ENCODE measurements at regions of chr12 and their contacts with region 1.

Region 1: DNA sequence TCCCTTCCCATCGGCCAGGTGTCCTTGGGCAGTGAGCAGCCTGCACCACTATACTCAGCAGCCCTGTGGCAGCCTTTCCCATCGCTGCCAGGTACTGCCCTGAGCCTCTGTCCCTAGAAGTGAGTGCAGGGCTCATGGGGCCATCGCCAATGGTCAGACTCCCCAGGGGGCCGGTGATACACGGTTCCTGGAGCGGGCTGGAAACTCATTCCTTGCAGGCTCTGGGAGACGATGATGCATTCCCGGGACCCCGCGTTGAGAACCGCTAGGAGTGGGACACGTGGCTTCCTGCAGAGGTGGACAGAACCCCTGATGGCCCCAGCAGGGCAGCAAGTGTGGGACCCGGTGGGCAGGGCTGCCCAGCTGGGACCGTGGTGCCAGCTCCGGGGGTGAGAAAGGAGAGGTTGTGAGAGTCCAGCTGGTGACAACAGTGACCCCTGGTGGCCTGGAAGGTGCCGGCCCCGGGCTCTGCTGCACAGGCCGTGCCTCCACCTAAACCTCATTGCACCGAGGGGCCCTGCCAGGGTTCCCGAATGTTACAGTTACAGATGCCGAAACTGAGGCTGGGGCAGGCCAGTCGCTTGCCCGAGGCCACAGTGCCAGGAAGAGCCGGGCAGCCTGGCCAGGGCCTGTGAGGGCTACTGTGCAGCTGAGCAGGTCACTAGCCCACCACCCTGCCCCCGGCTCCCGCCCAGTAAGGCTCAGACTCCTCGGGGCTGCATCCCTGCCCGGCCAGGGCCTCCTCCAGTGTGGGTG is 33.8 kb downstream of the FBRSL1 start:
- DNase-seq: peak; percentile 93
- H3K4me3 ChIP-seq: no peak overlapping the region; a peak in 1 of 4 replicates
- H3K27ac ChIP-seq: no peak overlapping the region
- H3K4me1 ChIP-seq: no peaks in the 10 kb centered on the region; a peak in 1 of 4 replicates
- H3K27me3 ChIP-seq: no peaks in the 10 kb centered on the region
- CTCF ChIP-seq: peak; percentile 80
- EP300 ChIP-seq: no peak
- RAD21 ChIP-seq: peak; percentile 67

Region 2: DNA sequence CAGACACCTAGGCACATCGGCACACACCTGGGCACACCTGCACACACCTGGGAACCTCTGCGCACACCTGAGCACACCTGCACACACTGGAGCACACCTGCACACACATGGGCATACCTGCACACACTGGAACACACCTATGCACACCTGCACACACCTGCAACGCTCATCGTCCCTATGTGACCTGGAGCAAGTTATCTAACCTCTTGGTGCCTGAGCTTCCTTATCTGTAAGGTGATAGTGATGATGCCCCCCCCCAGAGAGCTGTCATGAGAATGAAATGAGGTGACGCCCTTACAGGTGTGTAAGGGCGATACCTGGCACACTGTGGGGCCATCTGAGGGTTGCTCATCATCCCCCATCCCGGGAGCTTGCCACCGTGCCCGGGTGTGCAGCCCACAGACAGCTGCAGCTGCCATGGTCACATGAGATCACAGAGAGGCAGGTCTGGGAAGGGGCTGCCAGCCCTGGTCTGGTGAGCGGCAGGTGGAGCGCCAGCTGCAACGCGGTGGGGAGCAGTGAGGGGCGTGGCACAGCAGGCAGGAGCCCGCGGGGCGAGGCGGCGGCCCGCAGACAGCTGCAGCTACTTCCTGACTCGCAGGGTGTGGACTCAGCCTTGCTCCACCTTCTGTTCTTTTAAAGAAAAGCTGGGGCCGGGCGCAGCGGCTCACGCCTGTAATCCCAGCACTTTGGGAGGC is 93.7 kb before region 1 on chr12:
- CTCF ChIA-PET with region 1: interaction called, 10 read pairs
- POLR2A ChIA-PET with region 1: no interaction called
- DNase-seq: no peak
- H3K4me3 ChIP-seq: no peak overlapping the region
- H3K27ac ChIP-seq: no peak overlapping the region
- H3K4me1 ChIP-seq: peaks cover 0 to 9% of the 10 kb centered on the region in 2 experiments; a peak in 1 of 4 replicates
- H3K27me3 ChIP-seq: no peaks in the 10 kb centered on the region; the same call in none of the 2 replicates
- CTCF ChIP-seq: no peak
- EP300 ChIP-seq: no peak
- RAD21 ChIP-seq: no peak

Region 3: DNA sequence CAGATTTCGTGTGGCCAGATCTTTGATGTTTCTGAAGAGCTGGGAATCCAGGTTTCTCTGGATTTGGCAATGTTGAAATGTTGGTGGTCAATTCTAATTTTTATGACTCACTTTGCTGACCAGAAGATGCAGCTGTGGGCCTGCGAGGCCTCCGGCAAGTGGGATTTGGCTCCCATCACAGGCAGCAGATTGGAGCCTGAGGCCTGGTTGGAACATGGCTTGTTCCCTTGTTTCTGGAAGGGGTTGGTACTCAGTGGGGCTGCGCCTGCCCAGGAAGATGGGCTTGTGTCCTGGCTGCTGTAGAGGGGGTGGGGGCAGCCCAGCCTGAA is 10.7 kb before region 1 on chr12:
- CTCF ChIA-PET with region 1: interaction called, 17 read pairs
- POLR2A ChIA-PET with region 1: no interaction called
- DNase-seq: no peak
- H3K4me3 ChIP-seq: no peak overlapping the region
- H3K27ac ChIP-seq: no peak overlapping the region
- H3K4me1 ChIP-seq: no peaks in the 10 kb centered on the region; a peak in 1 of 4 replicates
- H3K27me3 ChIP-seq: no peaks in the 10 kb centered on the region
- CTCF ChIP-seq: no peak
- EP300 ChIP-seq: no peak
- RAD21 ChIP-seq: no peak